ENCODE measurements at regions of chr19 and their contacts with region 1.

Region 1: GRCh38 chr19:45340232-45340898 is at the start of gene KLC3:
- DNase-seq: peak; percentile 68 to 84
- H3K4me3 ChIP-seq: peak within 1 kb of the TSS; percentile 66
- H3K4me3 Mint-ChIP-seq: no peak within 1 kb of the TSS
- H3K27ac Mint-ChIP-seq: no peak within 1 kb of the TSS
- H3K4me1 ChIP-seq: peaks cover 5% of the 10 kb centered on the region; the same call in 1 of the 2 replicates
- H3K4me1 Mint-ChIP-seq: peaks cover 6% of the 10 kb centered on the region
- H3K27me3 ChIP-seq: no peaks in the 10 kb centered on the region
- H3K27me3 Mint-ChIP-seq: no peaks in the 10 kb centered on the region
- CTCF ChIP-seq: no peak
- total RNA-seq, gene KLC3: 7.1 and 10.2 TPM in 2 replicates

Region 2: DNA sequence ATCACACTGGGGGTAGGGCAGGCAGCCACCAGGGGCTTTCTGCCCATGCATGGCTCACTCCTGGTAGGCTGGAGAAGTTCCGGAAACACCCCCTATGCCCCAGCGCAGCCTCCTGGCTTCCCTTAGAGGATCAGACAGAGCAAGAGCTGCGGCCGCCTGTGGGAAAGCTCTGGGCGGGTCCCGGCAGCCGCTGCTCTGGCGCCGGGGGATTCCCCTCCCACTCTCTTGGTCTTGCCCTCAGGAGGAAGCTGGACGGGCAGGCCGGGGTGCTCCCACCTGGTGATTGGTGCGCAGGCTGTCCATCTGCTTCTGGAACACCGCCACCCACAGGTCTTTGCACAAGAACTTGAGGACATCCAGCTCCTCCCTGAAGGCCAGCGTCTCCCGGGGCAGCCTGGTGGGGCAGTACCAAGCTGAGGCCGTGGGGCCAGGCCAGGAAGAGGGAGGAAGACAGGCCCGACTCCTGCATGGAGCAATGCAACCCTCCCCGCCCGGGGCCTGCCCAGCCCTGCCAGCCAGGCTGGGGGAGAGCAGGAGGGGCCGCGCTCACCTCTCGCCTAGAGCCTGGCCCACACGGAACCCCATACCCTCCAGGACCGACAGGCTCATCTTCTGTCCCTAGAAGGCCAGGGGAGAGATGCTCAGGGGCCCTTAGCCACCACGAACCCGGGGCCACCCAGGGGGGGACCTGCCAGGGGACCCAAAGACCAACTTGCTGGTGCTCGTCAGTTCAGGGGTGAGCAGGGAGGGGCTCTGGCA is 175.6 kb before region 1 on chr19:
- CTCF ChIA-PET with region 1: interaction called, 4 read pairs
- POLR2A ChIA-PET with region 1: no interaction called
- intact Hi-C with region 1: loop called (anchors 2 kb)
- DNase-seq: peak in 1 of 2 experiments; percentile 41
- H3K4me3 ChIP-seq: no peak overlapping the region
- H3K4me3 Mint-ChIP-seq: no peak overlapping the region
- H3K27ac Mint-ChIP-seq: no peak overlapping the region
- H3K4me1 ChIP-seq: peaks cover 19% of the 10 kb centered on the region
- H3K4me1 Mint-ChIP-seq: peaks cover 23% of the 10 kb centered on the region
- H3K27me3 ChIP-seq: no peaks in the 10 kb centered on the region
- H3K27me3 Mint-ChIP-seq: no peaks in the 10 kb centered on the region
- CTCF ChIP-seq: no peak

Region 3: GRCh38 chr19:45200568-45200994 is 139.8 kb before region 1 on chr19:
- CTCF ChIA-PET with region 1: interaction called, 8 read pairs
- POLR2A ChIA-PET with region 1: no interaction called
- intact Hi-C with region 1: loop called (anchors 1 kb)
- DNase-seq: peak; percentile 65
- H3K4me3 ChIP-seq: no peak overlapping the region
- H3K4me3 Mint-ChIP-seq: no peak overlapping the region
- H3K27ac Mint-ChIP-seq: no peak overlapping the region
- H3K4me1 ChIP-seq: no peaks in the 10 kb centered on the region
- H3K4me1 Mint-ChIP-seq: no peaks in the 10 kb centered on the region
- H3K27me3 ChIP-seq: no peaks in the 10 kb centered on the region
- H3K27me3 Mint-ChIP-seq: peaks cover 8% of the 10 kb centered on the region
- CTCF ChIP-seq: peak; percentile 34 to 42

Region 4: GRCh38 chr19:45250832-45251451 is 89.4 kb before region 1 on chr19 and contains the start of gene MARK4:
- CTCF ChIA-PET with region 1: no interaction called
- POLR2A ChIA-PET with region 1: no interaction called
- intact Hi-C with region 1: loop called (anchors 5 kb)
- DNase-seq: peak in 1 of 2 experiments; percentile 63
- H3K4me3 ChIP-seq: peak within 1 kb of the TSS; percentile 83
- H3K4me3 Mint-ChIP-seq: peak within 1 kb of the TSS; percentile 84
- H3K27ac Mint-ChIP-seq: peak within 1 kb of the TSS; percentile 58
- H3K4me1 ChIP-seq: peaks cover 3% of the 10 kb centered on the region; the same call in 1 of the 2 replicates
- H3K4me1 Mint-ChIP-seq: peaks cover 7% of the 10 kb centered on the region
- H3K27me3 ChIP-seq: no peaks in the 10 kb centered on the region
- H3K27me3 Mint-ChIP-seq: no peaks in the 10 kb centered on the region
- CTCF ChIP-seq: no peak
- total RNA-seq, gene MARK4: 30.3 and 33.4 TPM in 2 replicates

Region 5: GRCh38 chr19:45276284-45276687 is 64.1 kb before region 1 on chr19:
- CTCF ChIA-PET with region 1: no interaction called
- POLR2A ChIA-PET with region 1: no interaction called
- intact Hi-C with region 1: no loop called
- DNase-seq: no peak
- H3K4me3 ChIP-seq: no peak overlapping the region
- H3K4me3 Mint-ChIP-seq: no peak overlapping the region
- H3K27ac Mint-ChIP-seq: no peak overlapping the region
- H3K4me1 ChIP-seq: no peaks in the 10 kb centered on the region
- H3K4me1 Mint-ChIP-seq: no peaks in the 10 kb centered on the region
- H3K27me3 ChIP-seq: no peaks in the 10 kb centered on the region
- H3K27me3 Mint-ChIP-seq: no peaks in the 10 kb centered on the region
- CTCF ChIP-seq: no peak

Region 6: GRCh38 chr19:45306518-45307027 is 33.8 kb before region 1 on chr19:
- CTCF ChIA-PET with region 1: no interaction called
- POLR2A ChIA-PET with region 1: no interaction called
- intact Hi-C with region 1: no loop called
- DNase-seq: no peak
- H3K4me3 ChIP-seq: no peak overlapping the region
- H3K4me3 Mint-ChIP-seq: no peak overlapping the region
- H3K27ac Mint-ChIP-seq: no peak overlapping the region
- H3K4me1 ChIP-seq: no peaks in the 10 kb centered on the region
- H3K4me1 Mint-ChIP-seq: no peaks in the 10 kb centered on the region
- H3K27me3 ChIP-seq: no peaks in the 10 kb centered on the region
- H3K27me3 Mint-ChIP-seq: no peaks in the 10 kb centered on the region
- CTCF ChIP-seq: no peak

Region 7: GRCh38 chr19:45382426-45382825 is 42.1 kb after region 1 on chr19:
- CTCF ChIA-PET with region 1: no interaction called
- POLR2A ChIA-PET with region 1: no interaction called
- intact Hi-C with region 1: no loop called
- DNase-seq: no peak
- H3K4me3 ChIP-seq: no peak overlapping the region
- H3K4me3 Mint-ChIP-seq: no peak overlapping the region
- H3K27ac Mint-ChIP-seq: peak overlapping the region; percentile 73
- H3K4me1 ChIP-seq: no peaks in the 10 kb centered on the region
- H3K4me1 Mint-ChIP-seq: no peaks in the 10 kb centered on the region
- H3K27me3 ChIP-seq: no peaks in the 10 kb centered on the region
- H3K27me3 Mint-ChIP-seq: no peaks in the 10 kb centered on the region
- CTCF ChIP-seq: no peak

Region 8: DNA sequence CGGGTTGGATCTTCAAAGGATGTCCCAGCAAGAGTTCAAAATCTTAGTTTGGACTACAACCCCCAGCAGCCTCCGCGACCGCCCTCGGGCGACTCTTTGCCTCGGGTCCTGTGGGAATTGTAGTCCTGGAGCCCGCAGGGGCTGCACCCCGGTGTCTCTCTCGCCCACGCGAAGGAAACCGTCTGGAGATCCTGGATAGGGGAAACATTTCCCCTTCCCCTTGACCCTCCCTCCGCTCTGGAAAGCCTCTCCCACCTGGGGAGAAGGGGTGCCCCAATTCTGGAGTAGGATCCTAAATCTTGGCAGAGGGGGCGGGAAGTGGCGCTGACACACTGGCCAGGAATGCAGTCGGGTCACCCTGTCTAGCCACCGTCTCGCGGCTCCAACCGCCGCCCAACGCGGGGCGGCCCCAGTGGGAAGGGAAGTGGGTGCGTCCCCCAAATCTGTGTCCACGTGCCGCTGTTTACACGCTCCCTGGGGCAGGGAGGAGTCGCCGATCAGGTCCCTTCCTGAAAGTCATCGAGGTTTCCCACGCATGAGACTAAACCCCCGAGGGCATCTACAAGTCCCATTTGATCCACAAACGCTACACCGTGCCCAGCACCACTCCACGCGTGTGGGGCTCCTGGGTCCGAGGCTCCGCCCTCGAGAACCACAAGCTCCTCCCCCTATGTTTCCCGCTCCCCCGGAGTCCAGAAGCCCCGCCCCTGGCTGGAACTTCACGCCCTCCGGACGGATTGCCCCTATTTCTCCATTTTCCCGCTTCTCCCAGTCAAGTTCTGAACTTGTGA is 65.3 kb after region 1 on chr19:
- CTCF ChIA-PET with region 1: no interaction called
- POLR2A ChIA-PET with region 1: no interaction called
- intact Hi-C with region 1: no loop called
- DNase-seq: peak; percentile 95 to 96
- H3K4me3 ChIP-seq: peak overlapping the region; percentile 81
- H3K4me3 Mint-ChIP-seq: peak overlapping the region; percentile 93
- H3K27ac Mint-ChIP-seq: peak overlapping the region; percentile 96
- H3K4me1 ChIP-seq: peaks cover 13% of the 10 kb centered on the region
- H3K4me1 Mint-ChIP-seq: peaks cover 17% of the 10 kb centered on the region
- H3K27me3 ChIP-seq: no peaks in the 10 kb centered on the region
- H3K27me3 Mint-ChIP-seq: no peaks in the 10 kb centered on the region
- CTCF ChIP-seq: no peak

Measured in Caco-2 (cell line).